T-cell (primary cell): ENCODE measurements at regions of chr5 and their contacts with region 1.

Region 1: GRCh38 chr5:78359831-78360673 is at the start of gene SCAMP1:
- DNase-seq: peak; percentile 79 to 96 (median 88)
- ATAC-seq: peak; percentile 88 to 91 (median 90)
- H3K4me3 ChIP-seq: peak within 1 kb of the TSS; percentile 92 to 100
- H3K4me3 Mint-ChIP-seq: peak within 1 kb of the TSS; percentile 90 to 95 (median 94)
- H3K27ac ChIP-seq: peak within 1 kb of the TSS; percentile 94
- H3K27ac Mint-ChIP-seq: peak within 1 kb of the TSS; percentile 93 to 96
- H3K4me1 ChIP-seq: peaks cover 7 to 20% of the 10 kb centered on the region in 2 experiments
- H3K4me1 Mint-ChIP-seq: peaks cover 48 to 59% (median 58%) of the 10 kb centered on the region in 3 donors
- H3K27me3 ChIP-seq: no peaks in the 10 kb centered on the region
- H3K27me3 Mint-ChIP-seq: no peaks in the 10 kb centered on the region
- total RNA-seq, gene SCAMP1: 20.6 to 28.3 (median 22.2) TPM

Region 2: DNA sequence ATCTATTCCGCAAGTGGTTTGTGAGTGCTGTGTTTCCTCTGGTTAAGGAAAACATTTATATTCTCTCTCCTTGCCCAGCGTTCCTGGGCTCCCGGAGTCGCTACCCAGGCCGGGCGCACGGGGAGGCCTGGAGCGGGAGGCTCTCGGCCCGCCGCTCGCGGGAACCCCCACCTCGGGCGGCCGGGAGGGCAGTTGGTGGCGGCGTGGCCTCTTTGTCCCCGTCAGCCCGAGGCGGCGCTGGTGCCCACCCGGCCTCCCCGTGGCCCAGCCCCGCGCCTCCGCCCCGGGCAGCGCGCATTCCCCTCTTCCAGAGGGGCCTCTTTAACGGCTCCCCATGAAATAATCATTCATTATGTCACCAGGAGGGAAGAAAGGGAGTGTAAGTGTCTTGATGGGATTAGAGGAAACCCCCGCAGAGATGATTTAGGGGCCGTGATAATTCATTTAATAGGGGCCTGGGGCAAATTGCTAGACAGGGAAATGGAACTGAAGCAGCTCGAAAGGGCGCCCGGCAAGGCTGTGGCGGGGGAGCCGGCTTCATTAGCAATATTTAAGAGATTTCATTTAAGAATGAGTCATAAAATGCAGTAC is 402.0 kb before region 1 on chr5:
- CTCF ChIA-PET with region 1: no interaction called
- POLR2A ChIA-PET with region 1: no interaction called
- DNase-seq: no peak
- ATAC-seq: no peak
- H3K4me3 ChIP-seq: no peak overlapping the region
- H3K4me3 Mint-ChIP-seq: peak overlapping the region in 1 of 3 donors; percentile 13
- H3K27ac ChIP-seq: no peak overlapping the region
- H3K27ac Mint-ChIP-seq: no peak overlapping the region
- H3K4me1 ChIP-seq: peaks cover 4 to 8% of the 10 kb centered on the region in 2 experiments
- H3K4me1 Mint-ChIP-seq: peaks cover 18 to 25% (median 19%) of the 10 kb centered on the region in 3 donors
- H3K27me3 ChIP-seq: peaks cover 5 to 24% of the 10 kb centered on the region in 2 experiments
- H3K27me3 Mint-ChIP-seq: peaks cover 23 to 41% of the 10 kb centered on the region in 2 donors

Region 3: GRCh38 chr5:78235289-78235688 is 124.8 kb before region 1 on chr5:
- CTCF ChIA-PET with region 1: no interaction called
- POLR2A ChIA-PET with region 1: no interaction called
- DNase-seq: no peak
- ATAC-seq: no peak
- H3K4me3 ChIP-seq: no peak overlapping the region
- H3K4me3 Mint-ChIP-seq: no peak overlapping the region
- H3K27ac ChIP-seq: no peak overlapping the region
- H3K27ac Mint-ChIP-seq: no peak overlapping the region
- H3K4me1 ChIP-seq: no peaks in the 10 kb centered on the region
- H3K4me1 Mint-ChIP-seq: peaks cover 6 to 22% (median 17%) of the 10 kb centered on the region in 3 donors
- H3K27me3 ChIP-seq: no peaks in the 10 kb centered on the region
- H3K27me3 Mint-ChIP-seq: no peaks in the 10 kb centered on the region

Region 4: GRCh38 chr5:78294248-78295034 is 65.6 kb before region 1 on chr5 and contains the start of gene AP3B1:
- CTCF ChIA-PET with region 1: interaction called, 13 to 76 read pairs
- POLR2A ChIA-PET with region 1: interaction called in 1 of 2 experiments, 44 read pairs
- DNase-seq: peak; percentile 91 to 98 (median 95)
- ATAC-seq: peak; percentile 91 to 95 (median 94)
- H3K4me3 ChIP-seq: peak within 1 kb of the TSS; percentile 81 to 82
- H3K4me3 Mint-ChIP-seq: peak within 1 kb of the TSS; percentile 96 to 99 (median 99)
- H3K27ac ChIP-seq: peak within 1 kb of the TSS; percentile 69
- H3K27ac Mint-ChIP-seq: peak within 1 kb of the TSS; percentile 94 to 99
- H3K4me1 ChIP-seq: peaks cover 6 to 15% of the 10 kb centered on the region in 2 experiments
- H3K4me1 Mint-ChIP-seq: peaks cover 43 to 60% (median 43%) of the 10 kb centered on the region in 3 donors
- H3K27me3 ChIP-seq: no peaks in the 10 kb centered on the region
- H3K27me3 Mint-ChIP-seq: no peaks in the 10 kb centered on the region
- total RNA-seq, gene AP3B1: 26.2 to 40.8 (median 31.4) TPM

Region 5: GRCh38 chr5:78377056-78377717 is 17.1 kb after region 1 on chr5:
- CTCF ChIA-PET with region 1: no interaction called
- POLR2A ChIA-PET with region 1: no interaction called
- DNase-seq: no peak
- ATAC-seq: no peak
- H3K4me3 ChIP-seq: no peak overlapping the region
- H3K4me3 Mint-ChIP-seq: no peak overlapping the region
- H3K27ac ChIP-seq: no peak overlapping the region
- H3K27ac Mint-ChIP-seq: no peak overlapping the region
- H3K4me1 ChIP-seq: no peaks in the 10 kb centered on the region
- H3K4me1 Mint-ChIP-seq: peaks cover 39 to 62% (median 45%) of the 10 kb centered on the region in 3 donors
- H3K27me3 ChIP-seq: no peaks in the 10 kb centered on the region
- H3K27me3 Mint-ChIP-seq: no peaks in the 10 kb centered on the region